ENCODE measurements at regions of chr3 and their contacts with region 1.

Region 1: GRCh38 chr3:67113802-67114407 is 115.8 kb downstream of the KBTBD8 start:
- DNase-seq: peak; percentile 89
- ATAC-seq: peak; percentile 99
- H3K4me3 Mint-ChIP-seq: no peak overlapping the region
- H3K27ac Mint-ChIP-seq: no peak overlapping the region
- H3K4me1 Mint-ChIP-seq: peaks cover 5% of the 10 kb centered on the region
- H3K27me3 Mint-ChIP-seq: peaks cover 15% of the 10 kb centered on the region

Region 2: DNA sequence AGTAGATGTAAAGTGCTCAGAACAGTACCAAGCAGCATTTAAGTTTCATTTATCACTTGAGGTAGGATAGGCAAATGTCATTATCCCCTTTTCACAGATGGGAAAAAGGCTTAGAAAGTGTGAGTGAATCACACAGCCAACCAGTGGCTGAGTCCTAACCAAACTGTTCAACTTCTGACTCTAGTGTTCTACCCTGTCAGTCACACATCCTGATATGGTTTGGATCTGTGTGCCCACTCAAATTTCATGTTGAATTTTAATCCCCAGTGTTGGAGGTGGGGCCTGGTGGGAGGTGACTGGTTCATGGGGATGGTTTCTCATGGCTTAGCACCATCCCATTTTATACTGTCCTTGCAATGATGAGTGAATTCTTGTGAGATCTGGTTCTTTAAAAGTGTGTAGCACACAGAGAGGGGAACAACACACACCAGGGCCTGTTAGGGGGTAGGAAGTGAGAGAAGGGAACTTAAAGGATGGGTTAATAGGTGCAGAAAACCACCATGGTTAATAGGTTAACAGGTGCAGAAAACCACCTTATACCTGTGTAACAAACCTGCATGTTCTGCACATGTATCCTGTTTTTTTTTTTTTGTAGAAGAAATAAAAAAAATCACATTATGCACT is 235.8 kb after region 1 on chr3:
- CTCF ChIA-PET with region 1: no interaction called
- POLR2A ChIA-PET with region 1: no interaction called
- intact Hi-C with region 1: loop called in 1 of 2 experiments (anchors 5 kb)
- DNase-seq: peak; percentile 67
- ATAC-seq: peak; percentile 94
- H3K4me3 Mint-ChIP-seq: no peak overlapping the region
- H3K27ac Mint-ChIP-seq: no peak overlapping the region
- H3K4me1 Mint-ChIP-seq: peaks cover 17% of the 10 kb centered on the region
- H3K27me3 Mint-ChIP-seq: peaks cover 10% of the 10 kb centered on the region

Region 3: DNA sequence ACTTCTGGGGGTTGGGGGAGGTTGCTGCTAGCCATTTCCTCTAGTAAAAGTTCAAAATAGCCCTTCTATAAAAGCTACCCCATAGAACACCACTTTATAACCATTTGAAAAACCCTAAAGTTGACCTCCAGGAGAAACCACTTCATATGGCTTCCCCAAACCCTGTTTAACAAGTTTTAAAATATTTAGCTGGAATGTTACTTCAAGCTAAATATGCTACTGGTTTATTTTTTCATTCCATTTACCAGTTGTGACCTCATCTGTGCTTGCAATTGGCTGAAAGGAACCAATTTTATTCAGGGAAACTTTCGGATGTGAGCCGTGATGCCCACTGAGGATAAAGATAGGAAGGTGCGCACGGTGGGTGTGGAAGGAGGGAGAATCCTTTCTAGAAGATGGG is 319.2 kb after region 1 on chr3:
- CTCF ChIA-PET with region 1: no interaction called
- POLR2A ChIA-PET with region 1: no interaction called
- intact Hi-C with region 1: no loop called
- DNase-seq: no peak
- ATAC-seq: no peak
- H3K4me3 Mint-ChIP-seq: no peak overlapping the region
- H3K27ac Mint-ChIP-seq: no peak overlapping the region
- H3K4me1 Mint-ChIP-seq: peaks cover 4% of the 10 kb centered on the region
- H3K27me3 Mint-ChIP-seq: no peaks in the 10 kb centered on the region

Region 4: DNA sequence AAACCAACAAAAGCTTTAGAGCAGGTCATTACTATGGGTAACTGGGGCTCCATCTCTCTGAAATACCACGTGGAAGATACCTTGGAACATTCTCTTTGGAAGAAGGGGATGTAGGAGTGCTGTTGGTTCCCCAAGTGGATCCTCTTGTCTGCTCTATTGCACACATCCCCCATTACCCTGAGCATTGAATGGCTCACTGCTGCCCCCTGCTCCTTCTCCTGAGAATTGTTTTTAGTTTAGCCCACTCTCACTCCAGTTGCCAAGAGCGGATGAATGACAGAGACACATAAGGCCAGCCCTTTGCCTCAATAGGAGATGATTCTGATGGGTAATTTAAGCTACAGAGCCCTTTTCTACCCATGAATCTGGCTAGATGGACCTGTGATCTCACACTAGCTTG is 676.1 kb after region 1 on chr3:
- CTCF ChIA-PET with region 1: interaction called, 7 read pairs
- POLR2A ChIA-PET with region 1: no interaction called
- intact Hi-C with region 1: loop called (anchors 1 kb)
- DNase-seq: peak; percentile 74
- ATAC-seq: peak; percentile 89
- H3K4me3 Mint-ChIP-seq: no peak overlapping the region
- H3K27ac Mint-ChIP-seq: no peak overlapping the region
- H3K4me1 Mint-ChIP-seq: peaks cover 13% of the 10 kb centered on the region
- H3K27me3 Mint-ChIP-seq: no peaks in the 10 kb centered on the region

Region 5: DNA sequence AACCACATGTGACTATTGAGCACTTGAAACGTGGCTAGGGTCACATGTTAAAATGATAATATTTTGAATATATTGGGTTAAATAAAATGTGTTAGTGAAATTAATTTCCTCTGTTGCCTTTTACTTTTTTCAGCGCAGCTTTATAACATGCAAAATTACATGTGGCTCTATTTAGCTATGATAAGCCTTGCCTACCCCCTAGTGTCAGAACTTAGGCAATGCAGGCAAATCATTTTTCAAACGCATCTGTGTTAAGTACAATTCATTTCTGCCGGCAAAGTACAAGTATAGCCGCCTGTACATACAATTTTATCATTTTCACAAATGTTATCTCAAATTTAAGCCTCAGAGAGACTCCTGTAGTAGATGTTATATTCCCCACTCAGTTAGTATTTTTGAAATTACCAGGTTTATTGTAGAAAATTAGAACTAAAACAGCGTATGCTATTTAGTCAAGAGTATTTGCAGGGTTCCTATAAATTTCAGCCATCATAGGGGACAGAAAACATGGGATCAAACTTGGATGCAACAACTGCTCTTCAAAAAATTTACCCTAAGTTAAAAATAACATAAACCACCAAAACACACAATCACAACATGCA is 1762.3 kb after region 1 on chr3:
- CTCF ChIA-PET with region 1: interaction called, 23 read pairs
- POLR2A ChIA-PET with region 1: no interaction called
- intact Hi-C with region 1: loop called (anchors 1 kb)
- DNase-seq: peak; percentile 38
- ATAC-seq: peak; percentile 49
- H3K4me3 Mint-ChIP-seq: no peak overlapping the region
- H3K27ac Mint-ChIP-seq: no peak overlapping the region
- H3K4me1 Mint-ChIP-seq: no peaks in the 10 kb centered on the region
- H3K27me3 Mint-ChIP-seq: peaks cover 8% of the 10 kb centered on the region